ENCODE measurements at regions of chr14 and their contacts with region 1.

Region 1: GRCh38 chr14:70027785-70028428 is 148.7 kb downstream of the SMOC1 start:
- DNase-seq: peak; percentile 83

Region 2: DNA sequence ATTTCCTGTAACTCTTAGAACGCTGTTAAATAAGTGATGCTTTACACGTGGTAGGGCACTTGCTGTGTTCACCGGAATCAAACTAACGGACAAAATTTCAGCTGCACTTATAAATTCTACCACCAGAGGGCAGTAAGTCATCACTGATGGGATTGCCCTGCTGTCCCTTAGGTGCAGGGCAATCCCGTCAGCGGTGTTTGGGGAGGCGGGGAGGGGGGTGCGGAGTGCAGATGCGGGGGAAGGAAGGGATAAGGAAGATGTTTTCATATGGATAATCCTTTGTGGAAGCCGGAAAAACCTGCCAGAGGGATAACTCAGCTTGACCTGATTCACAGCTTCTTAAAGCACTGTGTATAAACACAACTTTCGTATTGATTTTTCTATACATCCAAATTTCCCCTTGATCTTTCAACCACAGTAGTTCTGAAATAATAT is 209.1 kb before region 1 on chr14:
- intact Hi-C with region 1: loop called (anchors 2 kb)
- DNase-seq: no peak

Region 3: DNA sequence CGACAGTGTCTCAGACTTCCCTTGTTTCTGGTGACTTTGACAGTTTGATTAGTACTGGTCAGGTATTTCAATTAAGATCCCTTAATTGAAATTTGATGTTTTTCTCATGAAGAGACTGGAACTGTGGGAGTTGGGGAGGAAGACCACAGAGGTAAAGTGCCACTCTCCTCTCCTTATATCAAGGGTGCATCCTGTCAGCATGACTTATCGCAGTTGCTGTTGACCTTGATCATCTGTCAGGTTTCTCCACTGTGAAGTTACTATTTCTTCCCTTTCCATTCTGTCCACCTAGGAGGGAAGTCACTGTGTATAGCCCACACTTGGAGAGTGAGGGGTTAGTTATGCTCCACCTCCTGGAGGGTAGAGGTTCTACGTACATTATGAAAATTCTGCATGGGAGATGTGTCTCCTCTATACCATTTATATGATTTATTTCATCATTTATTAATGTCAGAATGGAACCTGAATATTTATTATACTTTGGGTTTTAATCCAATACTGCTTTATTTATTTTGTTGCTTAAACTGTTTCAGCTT is 189.0 kb before region 1 on chr14:
- intact Hi-C with region 1: no loop called
- DNase-seq: no peak

Region 4: GRCh38 chr14:69931960-69932359 is 95.9 kb before region 1 on chr14:
- intact Hi-C with region 1: no loop called
- DNase-seq: no peak

Region 5: DNA sequence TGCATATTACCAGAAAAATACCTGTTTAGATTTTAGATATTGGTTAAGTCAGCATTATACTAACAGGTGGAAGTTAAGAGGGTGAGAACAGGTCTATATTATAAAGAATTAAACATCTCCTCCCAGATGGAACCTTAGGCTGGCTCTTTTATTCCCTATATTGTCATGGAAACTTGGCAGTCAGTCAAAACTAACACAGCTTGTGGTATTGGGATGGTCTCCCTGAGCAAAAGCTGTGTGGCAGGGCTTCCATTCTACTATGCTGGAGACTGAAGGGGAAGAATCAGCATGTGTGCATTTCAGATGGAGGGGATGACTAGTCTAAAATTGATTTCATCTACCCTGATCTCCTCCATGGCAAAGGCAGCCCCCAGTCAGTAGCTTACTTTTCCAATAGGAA is 82.0 kb before region 1 on chr14:
- intact Hi-C with region 1: no loop called
- DNase-seq: no peak

Region 6: DNA sequence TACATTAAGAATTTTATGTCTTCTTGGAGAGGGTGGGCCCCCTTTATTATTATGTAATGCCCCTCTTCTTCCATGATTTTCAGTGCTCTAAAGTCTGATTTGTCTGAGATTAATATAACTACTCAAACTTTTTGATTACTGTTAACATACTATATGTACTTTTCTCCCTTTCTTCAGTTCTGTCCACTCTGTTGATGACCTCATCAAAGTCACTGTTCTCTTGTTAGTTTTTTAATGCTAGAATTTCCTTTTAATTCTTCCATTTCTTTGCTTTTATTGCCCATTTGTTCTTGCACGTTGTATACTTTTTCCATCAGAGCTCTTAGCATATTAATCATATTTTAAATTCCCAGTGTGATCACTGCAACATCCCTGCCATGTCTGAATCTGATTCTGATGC is 295.3 kb after region 1 on chr14:
- intact Hi-C with region 1: no loop called
- DNase-seq: no peak